MCF 10A (cell line): ENCODE measurements at regions of chr4 and their contacts with region 1.

Region 1: GRCh38 chr4:16289897-16290554 is 63.8 kb upstream of the TAPT1 start:
- DNase-seq: peak; percentile 54
- H3K4me3 Mint-ChIP-seq: no peak overlapping the region
- H3K27ac Mint-ChIP-seq: no peak overlapping the region
- H3K4me1 Mint-ChIP-seq: peaks cover 6% of the 10 kb centered on the region
- H3K27me3 Mint-ChIP-seq: peaks cover 23% of the 10 kb centered on the region
- CTCF ChIP-seq: peak; percentile 53

Region 2: DNA sequence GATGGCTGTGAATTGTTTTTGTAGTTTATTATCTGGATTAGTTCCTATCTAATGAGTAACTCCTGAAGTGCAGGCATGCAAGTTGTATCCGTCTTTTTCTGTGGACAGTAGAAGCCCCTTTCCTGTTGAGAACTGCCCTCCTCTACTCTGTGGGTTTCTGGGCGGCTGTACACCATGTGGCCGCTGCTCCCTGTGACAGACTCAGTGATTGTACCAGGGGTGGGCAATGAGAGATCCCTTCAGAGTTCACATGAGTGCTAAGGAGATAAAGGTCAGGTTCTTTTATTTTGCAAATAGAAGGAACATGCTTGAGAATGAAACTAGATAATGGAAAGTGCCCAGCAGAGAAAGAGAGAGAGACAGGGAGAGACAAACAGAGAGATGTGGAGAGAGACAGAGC is 12.6 kb after region 1 on chr4:
- CTCF ChIA-PET with region 1: interaction called, 16 read pairs
- POLR2A ChIA-PET with region 1: no interaction called
- intact Hi-C with region 1: no loop called
- DNase-seq: no peak
- H3K4me3 Mint-ChIP-seq: no peak overlapping the region
- H3K27ac Mint-ChIP-seq: no peak overlapping the region
- H3K4me1 Mint-ChIP-seq: no peaks in the 10 kb centered on the region
- H3K27me3 Mint-ChIP-seq: peaks cover 15% of the 10 kb centered on the region
- CTCF ChIP-seq: no peak

Region 3: GRCh38 chr4:16443504-16444088 is 153.6 kb after region 1 on chr4:
- CTCF ChIA-PET with region 1: interaction called, 100 read pairs
- POLR2A ChIA-PET with region 1: interaction called, 3 read pairs
- intact Hi-C with region 1: loop called (anchors 1 kb)
- DNase-seq: peak; percentile 65
- H3K4me3 Mint-ChIP-seq: no peak overlapping the region
- H3K27ac Mint-ChIP-seq: no peak overlapping the region
- H3K4me1 Mint-ChIP-seq: no peaks in the 10 kb centered on the region
- H3K27me3 Mint-ChIP-seq: peaks cover 83% of the 10 kb centered on the region
- CTCF ChIP-seq: peak; percentile 63

Region 4: DNA sequence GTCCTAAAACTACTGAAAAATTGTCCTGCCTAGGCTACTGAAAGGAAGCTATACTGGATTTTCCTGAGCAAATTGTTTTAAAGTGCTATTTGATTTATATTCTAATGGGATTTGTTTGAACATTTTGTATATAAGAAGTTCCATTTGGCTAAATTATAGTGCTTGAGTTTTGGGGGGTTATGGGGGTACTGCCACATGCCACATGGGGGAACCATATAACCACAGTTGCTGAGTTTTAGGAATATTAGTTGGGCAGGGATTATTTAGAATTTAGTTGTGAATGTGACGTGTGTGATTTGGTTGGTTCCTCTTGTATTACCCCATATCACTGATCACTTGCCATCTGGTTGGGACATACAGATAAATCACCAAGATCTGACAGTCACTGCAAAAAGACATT is 160.7 kb after region 1 on chr4:
- CTCF ChIA-PET with region 1: interaction called, 100 read pairs
- POLR2A ChIA-PET with region 1: no interaction called
- intact Hi-C with region 1: no loop called
- DNase-seq: no peak
- H3K4me3 Mint-ChIP-seq: no peak overlapping the region
- H3K27ac Mint-ChIP-seq: no peak overlapping the region
- H3K4me1 Mint-ChIP-seq: no peaks in the 10 kb centered on the region
- H3K27me3 Mint-ChIP-seq: peaks cover 75% of the 10 kb centered on the region
- CTCF ChIP-seq: peak; percentile 22

Region 5: DNA sequence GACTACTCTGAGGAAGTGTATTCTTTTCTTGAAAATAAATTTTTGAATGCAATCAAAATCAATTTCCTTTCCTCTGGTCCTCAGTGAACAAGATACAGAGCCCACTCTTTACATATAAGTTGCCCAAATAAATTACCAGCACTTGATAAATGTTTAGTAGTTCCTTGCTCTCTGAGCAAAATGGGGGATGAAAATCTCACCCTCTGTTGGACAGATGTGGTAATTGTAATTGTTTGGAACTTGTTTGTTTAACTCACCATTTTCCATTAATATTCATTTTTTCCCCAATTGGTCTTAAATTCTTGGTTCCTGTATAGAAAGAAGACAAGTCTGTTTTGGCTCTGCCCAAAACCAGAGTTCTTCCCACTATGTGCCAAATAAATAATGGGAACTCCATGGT is 462.1 kb after region 1 on chr4:
- CTCF ChIA-PET with region 1: interaction called, 3 read pairs
- POLR2A ChIA-PET with region 1: no interaction called
- intact Hi-C with region 1: loop called (anchors 1 kb)
- DNase-seq: peak; percentile 17
- H3K4me3 Mint-ChIP-seq: no peak overlapping the region
- H3K27ac Mint-ChIP-seq: no peak overlapping the region
- H3K4me1 Mint-ChIP-seq: peaks cover 3% of the 10 kb centered on the region
- H3K27me3 Mint-ChIP-seq: peaks cover 45% of the 10 kb centered on the region
- CTCF ChIP-seq: no peak

Region 6: GRCh38 chr4:16916719-16917337 is 626.8 kb after region 1 on chr4:
- CTCF ChIA-PET with region 1: no interaction called
- POLR2A ChIA-PET with region 1: no interaction called
- intact Hi-C with region 1: loop called (anchors 10 kb)
- DNase-seq: peak; percentile 81
- H3K4me3 Mint-ChIP-seq: no peak overlapping the region
- H3K27ac Mint-ChIP-seq: no peak overlapping the region
- H3K4me1 Mint-ChIP-seq: no peaks in the 10 kb centered on the region
- H3K27me3 Mint-ChIP-seq: no peaks in the 10 kb centered on the region
- CTCF ChIP-seq: peak; percentile 94